IMR-90 (cell line): ENCODE measurements at regions of chr4 and their contacts with region 1.

Region 1: GRCh38 chr4:127598656-127599055 is 34.1 kb upstream of the INTU start:
- DNase-seq: no peak
- ATAC-seq: no peak
- H3K4me3 ChIP-seq: no peak overlapping the region
- H3K27ac ChIP-seq: no peak overlapping the region
- H3K4me1 ChIP-seq: no peaks in the 10 kb centered on the region
- H3K27me3 ChIP-seq: peaks cover 2% of the 10 kb centered on the region; the same call in 1 of the 2 replicates
- CTCF ChIP-seq: no peak
- POLR2A ChIP-seq: no peak
- RAD21 ChIP-seq: no peak

Region 2: DNA sequence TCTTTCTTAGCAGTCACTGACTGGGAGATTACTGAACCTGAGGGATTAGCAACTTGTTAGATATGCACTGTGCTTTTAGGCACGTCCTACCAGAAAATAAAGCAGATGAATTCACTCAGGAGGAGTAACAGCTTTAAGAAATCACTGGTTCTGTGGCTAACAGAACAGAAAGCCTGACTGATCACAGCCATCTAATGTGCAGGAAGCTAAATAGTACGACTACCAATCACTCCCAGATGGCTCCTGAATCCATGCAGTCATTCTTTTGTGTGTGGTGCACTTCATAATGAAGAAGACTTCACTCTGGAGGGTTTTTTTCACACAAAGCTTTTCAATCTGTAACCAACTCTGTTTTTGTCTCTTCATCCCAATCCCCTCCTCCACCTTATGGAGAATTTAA is 271.2 kb before region 1 on chr4:
- CTCF ChIA-PET with region 1: no interaction called
- POLR2A ChIA-PET with region 1: no interaction called
- dilution Hi-C with region 1: no loop called
- in situ Hi-C with region 1: no loop called
- intact Hi-C with region 1: no loop called
- DNase-seq: no peak
- ATAC-seq: no peak
- H3K4me3 ChIP-seq: no peak overlapping the region
- H3K27ac ChIP-seq: no peak overlapping the region
- H3K4me1 ChIP-seq: no peaks in the 10 kb centered on the region
- H3K27me3 ChIP-seq: no peaks in the 10 kb centered on the region; the same call in 1 of the 2 replicates
- CTCF ChIP-seq: no peak
- POLR2A ChIP-seq: no peak
- RAD21 ChIP-seq: no peak

Region 3: DNA sequence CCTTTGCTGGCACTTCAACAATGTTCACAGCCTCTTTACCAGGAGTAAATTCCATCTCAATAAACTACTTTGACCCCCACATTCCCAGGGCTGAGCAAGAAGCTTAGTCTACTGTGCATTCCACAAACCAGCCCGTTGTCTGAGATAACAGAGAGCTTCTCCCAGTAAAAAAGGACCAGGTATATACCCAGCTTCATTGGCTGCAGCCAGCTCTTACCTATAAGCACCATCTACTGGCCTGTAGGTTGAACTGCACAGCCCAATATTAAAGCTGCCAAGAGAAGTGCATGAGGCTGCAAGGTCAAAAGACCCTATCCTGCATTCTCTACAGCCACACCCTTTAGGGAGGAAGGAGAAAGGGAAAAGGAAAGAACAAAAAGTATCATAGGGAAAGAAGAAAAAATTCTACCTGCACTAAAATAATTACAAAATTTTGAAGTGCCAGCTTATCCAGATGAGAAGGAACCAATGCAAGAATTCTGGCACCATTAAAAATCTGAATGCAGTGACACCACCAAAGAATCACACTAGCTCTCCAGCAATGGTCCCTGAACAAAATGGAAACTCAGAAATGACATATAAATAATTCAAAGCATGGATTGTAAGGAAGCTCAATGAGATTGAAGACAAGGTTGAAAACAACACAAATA is 11.6 kb before region 1 on chr4:
- CTCF ChIA-PET with region 1: interaction called, 17 read pairs
- POLR2A ChIA-PET with region 1: no interaction called
- dilution Hi-C with region 1: no loop called
- in situ Hi-C with region 1: no loop called
- intact Hi-C with region 1: no loop called
- DNase-seq: peak; percentile 39
- ATAC-seq: peak; percentile 98
- H3K4me3 ChIP-seq: no peak overlapping the region
- H3K27ac ChIP-seq: no peak overlapping the region
- H3K4me1 ChIP-seq: no peaks in the 10 kb centered on the region
- H3K27me3 ChIP-seq: no peaks in the 10 kb centered on the region
- CTCF ChIP-seq: peak; percentile 54
- POLR2A ChIP-seq: no peak
- RAD21 ChIP-seq: peak; percentile 40